Posterior cingulate gyrus (tissue), 11 donors: ENCODE measurements at regions of chr6 and their contacts with region 1.

Region 1: DNA sequence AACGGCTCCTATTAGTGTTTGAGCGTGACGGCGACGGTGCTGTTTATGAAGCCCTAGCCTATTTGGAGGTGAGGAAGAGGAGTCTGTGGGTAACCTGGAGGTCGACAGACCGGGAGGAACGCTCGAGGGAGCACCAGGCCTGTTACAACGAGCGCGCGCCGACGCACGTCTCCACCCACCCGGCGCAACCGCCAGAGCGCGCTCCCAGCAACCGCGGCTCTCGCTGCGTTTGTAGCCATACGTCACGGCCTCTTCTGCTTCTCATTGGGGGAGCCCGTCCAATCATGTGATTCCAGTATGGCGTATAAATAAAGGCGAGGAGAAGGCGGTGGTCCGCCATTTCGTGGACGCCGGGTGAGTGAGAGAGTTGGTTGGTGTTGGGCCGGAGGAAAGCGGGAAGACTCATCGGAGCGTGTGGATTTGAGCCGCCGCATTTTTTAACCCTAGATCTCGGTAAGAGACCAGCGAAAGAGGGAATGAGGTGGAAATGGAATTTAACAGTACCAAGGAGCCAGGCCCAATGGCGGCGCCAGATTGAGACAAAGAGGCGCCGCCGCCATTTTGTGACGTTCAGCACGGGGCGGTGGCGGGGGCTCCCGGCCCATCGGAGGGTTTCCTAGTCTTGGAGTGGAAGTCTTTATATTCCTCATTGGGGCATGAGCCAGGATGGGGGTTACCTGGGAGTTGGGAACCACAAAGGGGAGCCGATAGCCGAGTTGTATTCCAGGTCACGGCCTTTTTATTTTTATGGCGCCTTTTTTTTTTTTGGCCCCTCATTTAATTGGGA is at the start of gene SRSF3:
- DNase-seq: peak; percentile 95 to 100 (median 96)

Region 2: DNA sequence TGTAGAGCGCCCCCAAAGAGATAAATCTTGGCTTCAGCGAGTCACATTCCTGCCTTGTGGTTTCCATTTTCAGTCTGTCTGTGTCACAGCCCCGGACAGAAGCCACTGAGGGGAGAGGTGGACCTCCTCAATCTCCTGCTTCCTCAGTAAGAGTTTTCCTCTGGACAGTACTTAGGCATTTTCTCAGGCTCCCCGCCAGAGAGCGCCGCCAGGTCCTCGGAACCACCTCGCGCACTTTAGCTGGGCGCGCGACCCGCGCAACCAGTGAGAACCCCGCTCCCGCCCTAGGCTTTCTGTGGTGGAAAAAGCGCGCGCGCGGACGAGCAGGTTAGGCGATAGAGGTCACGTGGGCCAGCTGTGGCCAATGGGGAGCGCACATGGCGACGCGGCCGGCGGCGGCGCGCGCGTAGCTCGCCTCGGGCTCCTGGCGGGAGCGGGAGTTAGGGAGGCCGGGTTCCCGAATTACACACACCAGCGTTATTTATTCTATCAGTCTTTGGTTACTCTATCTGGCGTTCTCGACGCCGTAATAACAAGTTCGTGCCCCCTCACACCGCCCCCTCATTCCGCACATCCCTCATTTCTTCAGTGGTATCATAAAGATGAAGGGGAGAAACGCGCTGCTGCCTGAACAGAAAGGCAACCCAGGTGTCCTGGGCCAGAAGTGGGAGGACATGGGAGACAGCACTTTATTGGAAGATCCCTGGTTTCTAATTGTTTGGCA is 171.0 kb before region 1 on chr6:
- intact Hi-C with region 1: loop called (anchors 1 kb)
- DNase-seq: peak; percentile 94 to 99 (median 98)

Region 3: GRCh38 chr6:36546920-36547645 is 47.1 kb before region 1 on chr6 and contains the start of gene STK38:
- intact Hi-C with region 1: loop called (anchors 1 kb)
- DNase-seq: peak; percentile 80 to 97 (median 88)

Region 4: GRCh38 chr6:36692220-36692619 is 98.0 kb after region 1 on chr6:
- intact Hi-C with region 1: no loop called
- DNase-seq: no peak

Region 5: DNA sequence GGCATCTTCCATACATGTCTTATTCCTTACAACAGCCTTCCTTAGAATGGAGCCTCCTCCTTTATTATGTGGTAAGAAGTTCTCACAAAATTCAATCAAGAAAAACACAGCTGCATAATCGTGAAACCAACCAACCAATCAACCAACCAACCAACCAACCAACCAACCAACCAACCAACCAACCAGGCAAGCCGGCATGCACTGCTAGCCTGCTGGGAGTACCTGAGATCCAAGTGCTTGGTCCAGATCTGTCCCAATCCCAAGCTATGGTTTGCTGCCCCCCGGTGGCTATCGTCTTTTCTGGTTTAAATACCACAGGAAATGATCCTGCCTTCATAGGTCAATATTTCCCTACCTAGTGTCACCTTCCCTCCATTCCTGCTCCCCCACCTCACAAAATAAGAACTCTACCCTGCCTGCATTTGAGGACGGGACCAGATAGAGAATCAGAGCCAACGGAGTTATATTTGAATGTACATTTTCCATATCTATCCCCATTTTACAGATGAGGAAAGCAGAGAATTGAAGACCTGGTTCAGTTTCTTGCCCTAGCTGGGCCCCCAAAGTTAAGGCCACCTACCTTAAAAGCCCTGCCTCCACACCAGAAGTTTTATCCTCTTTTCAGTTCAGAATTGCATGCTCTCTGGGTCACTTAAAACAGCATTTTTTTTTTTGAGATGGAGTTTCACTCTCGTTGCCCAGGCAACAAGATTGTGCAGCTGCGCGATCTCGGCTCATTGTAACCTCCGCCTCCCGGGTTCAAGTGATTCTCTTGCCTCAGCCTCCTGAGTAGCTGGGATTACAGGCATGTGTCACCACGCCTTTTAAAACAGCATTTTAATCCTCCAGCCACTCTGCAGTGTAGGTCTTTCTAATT is 130.5 kb after region 1 on chr6:
- intact Hi-C with region 1: no loop called
- DNase-seq: peak in 6 of 10 donors; percentile 38 to 88 (median 64)

Region 6: DNA sequence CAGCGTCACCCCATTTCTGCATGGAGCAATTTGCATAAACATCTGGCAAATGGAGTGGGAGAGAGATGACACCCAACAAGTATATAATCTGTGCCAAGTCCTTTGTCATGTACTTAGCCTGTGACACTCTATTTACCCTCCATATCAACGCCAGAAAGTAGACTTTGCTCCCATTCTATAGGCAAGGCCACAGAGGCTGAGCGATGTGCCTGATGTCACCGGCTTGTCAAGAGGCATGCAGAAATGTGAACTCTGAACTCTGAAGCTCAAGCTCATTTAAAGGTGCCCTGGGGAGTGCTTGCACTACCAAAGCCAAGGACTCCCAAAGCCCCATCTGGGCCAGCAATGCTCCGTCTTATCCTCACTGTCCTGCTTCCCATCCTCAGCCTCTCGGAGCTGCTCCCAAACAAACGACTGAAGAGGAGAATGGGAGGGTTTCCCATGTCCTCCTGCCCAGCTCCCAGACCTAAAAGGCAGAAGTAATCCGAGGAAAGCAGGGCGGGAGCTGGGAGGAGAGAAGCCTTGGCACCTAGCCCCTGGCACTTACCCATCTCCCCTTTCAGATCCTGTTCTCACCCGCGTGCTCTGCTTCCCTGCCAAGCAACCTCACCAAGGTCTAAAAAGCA is 235.8 kb after region 1 on chr6:
- intact Hi-C with region 1: no loop called
- DNase-seq: peak in 5 of 10 donors; percentile 27 to 86 (median 46)